ENCODE measurements at regions of chr6 and their contacts with region 1.

Region 1: DNA sequence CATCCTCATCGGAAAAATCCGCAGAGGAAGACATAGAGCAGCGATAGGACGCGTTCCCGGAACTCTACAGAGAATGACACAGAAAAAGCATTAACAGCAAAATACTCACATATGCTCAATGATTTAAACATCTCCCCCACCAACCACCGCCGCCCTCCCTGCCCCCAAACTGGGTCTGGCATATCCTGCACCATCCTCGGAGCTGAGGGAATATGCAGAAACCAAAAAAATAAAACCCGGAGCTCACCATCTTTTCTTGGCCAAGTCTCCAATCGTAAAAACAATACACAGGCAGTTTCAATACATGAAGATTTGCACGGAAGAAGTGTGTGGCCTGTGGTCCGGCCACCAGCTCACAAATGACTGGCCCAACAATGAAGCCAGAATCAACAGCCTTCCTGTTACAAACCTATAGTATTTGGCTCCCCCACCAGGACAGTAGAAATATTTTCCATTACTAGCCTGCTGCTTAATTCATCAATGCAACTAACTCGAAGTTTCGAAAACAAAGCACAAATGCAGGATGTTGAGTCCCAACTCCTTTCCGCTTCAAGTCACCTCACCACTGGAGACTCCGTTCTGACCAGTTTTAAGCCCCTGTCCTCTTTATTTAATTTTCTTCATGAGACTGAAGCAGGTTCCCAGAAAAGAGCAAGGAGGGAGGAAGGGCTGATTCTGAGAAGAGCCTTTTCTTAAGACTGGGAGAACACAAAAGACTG is 103.2 kb upstream of the BEND6 start:
- DNase-seq: peak; percentile 82
- H3K4me3 ChIP-seq: peak overlapping the region; percentile 26
- H3K27ac ChIP-seq: peak overlapping the region; percentile 38
- H3K4me1 ChIP-seq: peaks cover 35% of the 10 kb centered on the region
- H3K27me3 ChIP-seq: no peaks in the 10 kb centered on the region
- CTCF ChIP-seq: peak; percentile 82

Region 2: DNA sequence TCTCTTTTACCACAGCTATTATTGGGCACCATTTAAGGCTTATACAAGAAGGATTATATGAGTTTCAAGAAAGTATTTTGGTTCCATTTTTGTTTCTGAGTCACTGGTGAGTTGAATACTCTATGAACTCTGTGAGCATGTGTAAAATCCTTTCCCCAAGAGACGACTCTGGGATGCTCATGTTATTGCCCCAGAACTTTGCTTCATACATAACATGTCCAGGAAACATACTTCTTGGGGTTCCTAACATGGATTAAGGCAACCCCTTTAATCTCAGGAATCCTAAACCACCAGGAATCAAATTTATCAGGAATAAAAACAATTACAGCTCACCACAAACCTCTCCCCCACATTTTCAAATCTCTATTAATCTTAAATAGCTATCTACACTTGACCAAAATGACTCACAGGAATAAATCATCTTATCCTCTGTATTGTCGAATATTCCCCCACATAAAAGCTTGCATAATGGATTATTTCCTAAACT is 486.8 kb before region 1 on chr6:
- CTCF ChIA-PET with region 1: no interaction called
- POLR2A ChIA-PET with region 1: no interaction called
- intact Hi-C with region 1: loop called (anchors 10 kb)
- DNase-seq: peak; percentile 44
- H3K4me3 ChIP-seq: no peak overlapping the region
- H3K27ac ChIP-seq: no peak overlapping the region
- H3K4me1 ChIP-seq: peaks cover 23% of the 10 kb centered on the region
- H3K27me3 ChIP-seq: no peaks in the 10 kb centered on the region
- CTCF ChIP-seq: no peak

Region 3: GRCh38 chr6:56637640-56638039 is 214.1 kb before region 1 on chr6:
- CTCF ChIA-PET with region 1: interaction called, 6 read pairs
- POLR2A ChIA-PET with region 1: no interaction called
- intact Hi-C with region 1: loop called (anchors 1 kb)
- DNase-seq: peak; percentile 75
- H3K4me3 ChIP-seq: no peak overlapping the region
- H3K27ac ChIP-seq: no peak overlapping the region
- H3K4me1 ChIP-seq: peaks cover 2% of the 10 kb centered on the region
- H3K27me3 ChIP-seq: no peaks in the 10 kb centered on the region
- CTCF ChIP-seq: peak; percentile 71

Region 4: GRCh38 chr6:56708810-56709597 is 142.7 kb before region 1 on chr6:
- CTCF ChIA-PET with region 1: interaction called, 10 read pairs
- POLR2A ChIA-PET with region 1: no interaction called
- intact Hi-C with region 1: loop called (anchors 2 kb)
- DNase-seq: peak; percentile 80
- H3K4me3 ChIP-seq: no peak overlapping the region
- H3K27ac ChIP-seq: no peak overlapping the region
- H3K4me1 ChIP-seq: peaks cover 13% of the 10 kb centered on the region
- H3K27me3 ChIP-seq: no peaks in the 10 kb centered on the region
- CTCF ChIP-seq: peak; percentile 84

Region 5: GRCh38 chr6:57089687-57090460 is 238.2 kb after region 1 on chr6 and contains the start of gene ZNF451:
- CTCF ChIA-PET with region 1: no interaction called
- POLR2A ChIA-PET with region 1: no interaction called
- intact Hi-C with region 1: no loop called
- DNase-seq: peak; percentile 99
- H3K4me3 ChIP-seq: peak within 1 kb of the TSS; percentile 53
- H3K27ac ChIP-seq: peak within 1 kb of the TSS; percentile 78
- H3K4me1 ChIP-seq: peaks cover 21% of the 10 kb centered on the region
- H3K27me3 ChIP-seq: no peaks in the 10 kb centered on the region
- CTCF ChIP-seq: no peak
- total RNA-seq, gene ZNF451: 72.2 and 72.7 TPM in 2 replicates